A549 (cell line): ENCODE measurements at regions of chr17 and their contacts with region 1.

Region 1: GRCh38 chr17:28726226-28727130 is at the start of gene TLCD1:
- DNase-seq: peak; percentile 73 to 92
- ATAC-seq: peak; percentile 44 to 56
- H3K4me3 ChIP-seq: peak within 1 kb of the TSS; percentile 63
- H3K27ac ChIP-seq: peak within 1 kb of the TSS; percentile 94 to 98
- H3K4me1 ChIP-seq: peaks cover 46% of the 10 kb centered on the region
- CTCF ChIP-seq: peak; percentile 100
- EP300 ChIP-seq: no peak
- POLR2A ChIP-seq: no peak
- RAD21 ChIP-seq: peak; percentile 100
- polyA plus RNA-seq, gene TLCD1: 83.3 and 86.7 TPM in 2 replicates

Region 2: GRCh38 chr17:28644985-28645939 is 81.2 kb before region 1 on chr17 and contains the start of gene BLTP2:
- CTCF ChIA-PET with region 1: interaction called, 41 read pairs
- POLR2A ChIA-PET with region 1: interaction called, 9 read pairs
- DNase-seq: peak; percentile 97 to 99
- ATAC-seq: peak; percentile 94 to 97
- H3K4me3 ChIP-seq: peak within 1 kb of the TSS; percentile 94
- H3K27ac ChIP-seq: peak within 1 kb of the TSS; percentile 97 to 99
- H3K4me1 ChIP-seq: peaks cover 32% of the 10 kb centered on the region
- CTCF ChIP-seq: no peak
- EP300 ChIP-seq: no peak
- POLR2A ChIP-seq: peak; percentile 82
- RAD21 ChIP-seq: no peak
- polyA plus RNA-seq, gene BLTP2: 150 and 243 TPM in 2 replicates

Region 3: GRCh38 chr17:28750178-28751047 is 23.9 kb after region 1 on chr17:
- CTCF ChIA-PET with region 1: interaction called, 977 read pairs
- POLR2A ChIA-PET with region 1: interaction called, 369 read pairs
- DNase-seq: peak; percentile 82 to 96
- ATAC-seq: peak; percentile 57 to 72
- H3K4me3 ChIP-seq: no peak overlapping the region
- H3K27ac ChIP-seq: peak overlapping the region in 1 of 2 experiments; percentile 10; a peak in 1 of 6 replicates
- H3K4me1 ChIP-seq: peaks cover 50% of the 10 kb centered on the region
- CTCF ChIP-seq: peak; percentile 99
- EP300 ChIP-seq: no peak
- POLR2A ChIP-seq: no peak
- RAD21 ChIP-seq: peak; percentile 87 to 88

Region 4: DNA sequence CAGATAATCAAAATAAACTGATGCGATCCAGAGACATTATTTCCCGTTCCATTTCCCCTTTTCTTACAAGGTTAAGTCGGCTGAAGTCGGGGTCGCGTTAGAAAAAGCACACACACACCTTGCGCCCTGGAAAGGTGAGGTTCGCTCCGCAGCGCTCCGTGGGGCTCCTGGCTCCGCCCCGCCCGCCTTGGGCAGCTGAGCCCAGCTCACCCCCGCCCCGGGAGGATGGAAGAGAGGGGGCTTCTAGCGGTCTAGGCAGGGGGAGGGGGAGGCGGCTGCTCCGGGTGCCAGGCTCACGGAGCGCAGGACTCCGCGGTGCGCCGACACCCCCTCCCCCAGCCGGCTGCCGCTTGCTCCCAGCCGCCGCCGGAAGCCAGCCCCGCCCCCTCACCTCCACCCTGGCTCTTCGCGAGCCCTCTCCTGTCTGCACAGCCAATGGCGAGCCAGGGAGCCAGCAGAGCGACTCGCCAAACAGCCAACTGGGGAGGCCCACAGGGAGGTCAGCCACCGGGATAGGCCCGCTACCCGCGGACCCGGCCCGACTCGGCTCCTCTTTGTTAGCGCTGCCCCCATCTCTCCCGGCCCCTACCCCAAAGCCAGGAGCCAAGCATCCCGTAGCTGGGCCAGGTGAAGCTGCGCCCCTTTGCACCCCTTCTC is 85.7 kb after region 1 on chr17:
- CTCF ChIA-PET with region 1: interaction called, 11 read pairs
- POLR2A ChIA-PET with region 1: interaction called, 4 read pairs
- DNase-seq: peak; percentile 97 to 100
- ATAC-seq: peak; percentile 97 to 98
- H3K4me3 ChIP-seq: peak overlapping the region; percentile 73
- H3K27ac ChIP-seq: peak overlapping the region; percentile 89 to 94
- H3K4me1 ChIP-seq: peaks cover 46% of the 10 kb centered on the region
- CTCF ChIP-seq: no peak
- EP300 ChIP-seq: no peak
- POLR2A ChIP-seq: peak; percentile 54
- RAD21 ChIP-seq: no peak

Region 5: DNA sequence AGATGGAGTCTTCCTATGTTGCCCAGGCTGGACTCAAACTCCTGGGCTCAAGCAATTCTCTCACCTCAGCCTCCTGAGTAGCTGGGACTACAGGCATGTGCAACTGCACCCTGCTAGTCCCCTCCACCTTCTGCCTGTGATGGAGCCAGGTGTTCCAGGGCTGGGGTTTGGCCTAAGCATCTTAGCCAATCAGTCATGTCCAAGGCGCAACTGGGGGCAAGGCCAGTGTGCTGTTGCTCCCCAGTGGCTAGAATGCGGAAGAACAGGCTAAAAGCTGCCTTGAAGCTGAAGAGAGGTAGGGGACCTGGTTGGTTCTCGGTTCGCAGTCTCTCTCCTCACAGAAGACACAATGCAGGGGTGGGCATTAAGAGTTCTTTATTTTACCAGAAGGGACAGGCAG is 152.5 kb after region 1 on chr17:
- CTCF ChIA-PET with region 1: interaction called, 34 read pairs
- POLR2A ChIA-PET with region 1: interaction called, 3 read pairs
- DNase-seq: peak; percentile 81 to 90
- ATAC-seq: peak; percentile 77 to 96
- H3K4me3 ChIP-seq: no peak overlapping the region
- H3K27ac ChIP-seq: no peak overlapping the region
- H3K4me1 ChIP-seq: no peaks in the 10 kb centered on the region
- CTCF ChIP-seq: peak; percentile 48
- EP300 ChIP-seq: no peak
- POLR2A ChIP-seq: no peak
- RAD21 ChIP-seq: peak; percentile 67 to 88

Region 6: DNA sequence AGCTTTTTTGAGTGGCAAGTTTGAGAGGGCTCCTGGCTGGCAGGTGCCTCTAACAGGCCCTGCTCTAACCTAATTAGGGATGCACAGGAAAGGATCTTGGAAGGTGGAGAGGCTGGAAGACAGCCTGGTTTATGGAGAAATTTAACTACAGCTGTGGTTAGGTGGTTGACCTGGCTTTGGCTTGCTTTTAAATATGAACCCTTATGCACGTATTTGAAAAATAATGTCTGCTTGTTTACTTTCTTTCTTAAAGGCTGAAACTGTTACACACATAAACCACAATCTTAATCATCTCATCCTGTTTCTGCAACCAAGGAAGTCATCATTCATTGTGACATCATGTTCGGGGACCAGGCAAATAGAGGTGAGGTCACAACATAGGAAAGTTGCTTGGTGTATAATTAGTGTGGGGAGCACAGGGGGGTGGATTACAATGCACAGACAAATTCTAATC is 199.5 kb after region 1 on chr17:
- CTCF ChIA-PET with region 1: interaction called, 17 read pairs
- POLR2A ChIA-PET with region 1: no interaction called
- DNase-seq: no peak
- ATAC-seq: no peak
- H3K4me3 ChIP-seq: no peak overlapping the region
- H3K27ac ChIP-seq: no peak overlapping the region
- H3K4me1 ChIP-seq: 0 out of 3 replicates have a peak, but pooled peaks cover 4% of the 10 kb centered on the region
- CTCF ChIP-seq: no peak
- EP300 ChIP-seq: no peak
- POLR2A ChIP-seq: no peak
- RAD21 ChIP-seq: no peak

Region 7: GRCh38 chr17:28951991-28952975 is 225.8 kb after region 1 on chr17:
- CTCF ChIA-PET with region 1: interaction called, 132 read pairs
- POLR2A ChIA-PET with region 1: interaction called, 89 read pairs
- DNase-seq: peak; percentile 100
- ATAC-seq: peak; percentile 75 to 91
- H3K4me3 ChIP-seq: peak overlapping the region; percentile 56
- H3K27ac ChIP-seq: peak overlapping the region; percentile 89 to 91
- H3K4me1 ChIP-seq: peaks cover 21% of the 10 kb centered on the region
- CTCF ChIP-seq: no peak
- EP300 ChIP-seq: no peak
- POLR2A ChIP-seq: peak; percentile 16
- RAD21 ChIP-seq: no peak